ENCODE measurements at regions of chr4 and their contacts with region 1.

Region 1: GRCh38 chr4:124334119-124334518 is 378.4 kb downstream of the ANKRD50 start:
- DNase-seq: peak in 18 of 42 donors; percentile 28 to 75 (median 46)

Region 2: DNA sequence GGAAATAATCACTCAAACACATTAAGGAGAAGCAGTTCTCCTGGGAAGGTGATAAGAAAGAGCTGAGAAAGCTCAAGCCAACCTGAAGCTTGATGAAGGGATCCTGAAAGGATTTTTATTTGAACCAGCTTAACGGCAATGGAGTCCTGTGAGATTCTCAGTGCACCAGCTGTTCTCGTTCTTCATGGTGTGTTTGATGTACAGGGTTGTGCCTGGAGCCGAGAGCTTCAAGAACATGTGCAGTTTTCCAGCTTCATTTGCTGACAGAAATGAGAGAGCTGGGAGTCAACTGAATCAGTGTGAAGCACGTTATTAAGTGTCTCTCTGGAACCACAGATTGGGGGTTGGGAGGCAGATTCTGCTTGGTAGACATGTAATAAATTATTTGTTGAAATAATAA is 262.7 kb after region 1 on chr4:
- intact Hi-C with region 1: no loop called
- DNase-seq: no peak

Region 3: GRCh38 chr4:125244848-125245450 is 910.8 kb after region 1 on chr4:
- intact Hi-C with region 1: loop called (anchors 10 kb)
- DNase-seq: no peak

Region 4: DNA sequence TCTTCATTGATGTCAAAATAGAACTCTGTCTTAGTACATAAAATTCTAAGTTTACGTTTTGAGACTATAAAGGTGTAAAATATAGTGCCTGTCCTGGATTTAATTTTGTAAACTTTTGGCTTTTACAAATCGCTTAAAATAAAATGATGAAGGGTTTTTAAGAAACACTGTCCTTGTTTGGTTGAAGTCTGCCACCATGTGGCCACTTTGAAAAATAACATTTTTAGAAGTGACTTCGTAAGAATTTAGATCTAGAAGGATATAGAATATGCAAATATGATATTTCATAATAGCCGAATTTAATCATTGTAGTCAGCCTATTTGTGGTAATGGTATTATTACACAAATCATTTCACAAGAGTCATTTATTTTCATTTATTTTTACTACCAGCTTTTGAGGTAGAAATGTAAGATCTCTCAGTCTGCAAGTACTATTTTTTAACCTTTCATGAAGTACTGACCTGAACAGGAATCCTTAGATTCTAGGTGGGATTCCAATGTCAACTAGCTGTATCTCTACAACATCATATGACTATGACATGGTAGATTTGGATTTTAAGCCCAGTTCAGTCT is 949.7 kb after region 1 on chr4:
- intact Hi-C with region 1: loop called (anchors 10 kb)
- DNase-seq: peak in 5 of 42 donors; percentile 5 to 32 (median 17)